Stomach (tissue), 19 donors: ENCODE measurements at regions of chr4 and their contacts with region 1.

Region 1: DNA sequence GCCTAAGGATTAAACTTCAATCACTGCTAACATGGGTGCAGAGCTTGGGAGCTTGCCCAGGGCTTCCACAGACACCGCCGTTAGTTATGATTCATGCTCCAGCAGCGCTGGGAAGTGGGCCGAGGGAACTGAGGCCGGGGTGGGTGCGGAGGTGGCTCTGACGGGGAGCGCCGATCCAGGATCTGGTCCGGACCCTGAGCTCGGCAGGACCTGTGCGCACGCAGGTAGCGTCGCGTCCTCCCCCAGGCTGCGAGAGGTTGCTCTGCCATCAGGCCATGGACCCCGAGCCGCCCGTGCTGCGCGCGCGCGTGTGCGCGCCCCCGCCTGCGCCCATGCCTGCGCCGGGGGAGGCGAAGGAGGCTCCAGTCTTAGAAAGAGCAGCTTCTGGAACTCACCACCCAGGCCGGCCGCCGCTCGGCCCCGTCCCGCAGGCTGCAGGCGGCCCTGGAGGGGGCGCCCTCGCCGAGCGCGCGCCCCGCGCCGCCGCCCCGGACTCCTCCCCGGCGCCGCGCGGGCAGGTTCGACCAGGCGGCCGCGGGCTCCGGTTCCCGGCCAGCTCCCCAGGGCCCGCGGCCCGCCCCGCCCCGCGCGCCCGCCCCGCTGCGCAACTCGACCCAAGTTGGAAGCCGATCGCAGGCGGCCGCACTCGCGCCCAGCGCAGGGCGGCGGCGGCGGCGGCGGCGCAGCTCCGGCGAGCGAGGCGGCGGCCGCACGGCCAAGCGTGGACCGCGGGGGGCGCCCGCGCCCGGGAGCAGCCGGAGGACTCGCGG is 729 bp upstream of the ADRA2C start:
- DNase-seq: peak; percentile 32 to 78
- H3K4me3 ChIP-seq: peak overlapping the region; percentile 34 to 41 (median 40)
- H3K27ac ChIP-seq: peak overlapping the region in 2 of 5 donors; percentile 34 to 65
- H3K4me1 ChIP-seq: peaks cover 3 to 26% (median 12%) of the 10 kb centered on the region in 4 donors
- H3K27me3 ChIP-seq: peaks cover 0 to 70% (median 38%) of the 10 kb centered on the region in 3 donors
- CTCF ChIP-seq: no peak
- EP300 ChIP-seq: no peak
- POLR2A ChIP-seq: no peak

Region 2: DNA sequence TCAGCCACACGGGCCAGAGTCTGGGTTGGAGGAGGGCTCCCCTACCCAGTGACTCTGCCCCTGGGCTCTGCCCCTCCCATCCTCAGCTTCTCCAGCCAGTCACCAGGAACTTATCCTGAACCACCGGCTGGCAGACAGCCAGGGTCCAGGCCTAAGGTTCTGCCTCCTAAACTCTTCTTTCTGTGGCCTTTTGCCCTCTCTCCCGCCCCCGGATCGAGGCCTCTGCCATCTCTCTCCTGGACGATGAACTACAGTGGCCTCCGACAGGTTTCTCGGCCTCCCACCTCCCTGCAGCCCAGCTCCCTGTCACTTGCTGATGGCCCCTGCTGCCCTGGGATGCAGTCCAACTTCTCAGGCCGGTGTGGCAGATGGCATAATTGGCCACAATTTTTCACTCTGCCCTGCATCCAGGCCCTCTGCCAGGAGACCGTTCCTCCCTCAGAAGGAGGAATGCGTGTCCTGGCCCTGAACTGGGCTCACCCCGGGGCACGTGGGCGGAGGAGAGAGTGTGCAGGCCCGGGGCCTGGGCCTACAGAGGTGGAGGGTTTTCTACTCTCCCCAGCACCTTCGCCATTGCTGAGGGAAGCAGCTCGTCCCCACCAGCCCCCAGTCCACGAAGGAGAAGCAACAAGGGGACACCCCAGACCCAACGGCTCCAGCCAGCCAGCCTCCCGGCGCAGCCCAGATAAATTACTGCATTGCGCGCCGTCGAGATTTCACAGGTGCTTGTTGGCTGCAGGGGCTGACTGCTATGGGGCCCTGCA is 151.3 kb before region 1 on chr4:
- intact Hi-C with region 1: no loop called
- DNase-seq: peak in 1 of 2 donors; percentile 55
- H3K4me3 ChIP-seq: no peak overlapping the region
- H3K27ac ChIP-seq: no peak overlapping the region
- H3K4me1 ChIP-seq: peaks cover 0 to 14% (median 2%) of the 10 kb centered on the region in 4 donors
- H3K27me3 ChIP-seq: peaks cover 0 to 41% (median 0%) of the 10 kb centered on the region in 3 donors
- CTCF ChIP-seq: no peak
- EP300 ChIP-seq: no peak
- POLR2A ChIP-seq: no peak

Region 3: GRCh38 chr4:3816256-3816825 is 50.9 kb after region 1 on chr4:
- intact Hi-C with region 1: no loop called
- DNase-seq: no peak
- H3K4me3 ChIP-seq: no peak overlapping the region
- H3K27ac ChIP-seq: no peak overlapping the region
- H3K4me1 ChIP-seq: no peaks in the 10 kb centered on the region
- H3K27me3 ChIP-seq: peaks cover 0 to 27% (median under 1%) of the 10 kb centered on the region in 3 donors
- CTCF ChIP-seq: no peak
- EP300 ChIP-seq: no peak
- POLR2A ChIP-seq: no peak

Region 4: GRCh38 chr4:3827616-3828492 is 62.4 kb after region 1 on chr4:
- intact Hi-C with region 1: no loop called
- DNase-seq: peak; percentile 84 to 95
- H3K4me3 ChIP-seq: peak overlapping the region; percentile 9 to 23 (median 12)
- H3K27ac ChIP-seq: peak overlapping the region; percentile 39 to 70 (median 59)
- H3K4me1 ChIP-seq: peaks cover 16 to 21% (median 17%) of the 10 kb centered on the region in 4 donors
- H3K27me3 ChIP-seq: peaks cover 0 to under 1% (median 0%) of the 10 kb centered on the region in 3 donors
- CTCF ChIP-seq: peak in 1 of 7 experiments; percentile 6
- EP300 ChIP-seq: no peak
- POLR2A ChIP-seq: no peak

Region 5: GRCh38 chr4:3880615-3881120 is 115.2 kb after region 1 on chr4:
- intact Hi-C with region 1: loop called (anchors 10 kb)
- DNase-seq: peak; percentile 75 to 91
- H3K4me3 ChIP-seq: peak overlapping the region in 1 of 4 donors; percentile 13
- H3K27ac ChIP-seq: no peak overlapping the region
- H3K4me1 ChIP-seq: peaks cover 0 to 17% (median 13%) of the 10 kb centered on the region in 4 donors
- H3K27me3 ChIP-seq: peaks cover 8 to 82% (median 37%) of the 10 kb centered on the region in 3 donors
- CTCF ChIP-seq: peak in 6 of 7 experiments; percentile 6 to 85 (median 69)
- EP300 ChIP-seq: no peak
- POLR2A ChIP-seq: no peak